ENCODE measurements at regions of chr4 and their contacts with region 1.

Region 1: GRCh38 chr4:77994194-77994721 is 62.9 kb upstream of the FRAS1 start:
- DNase-seq: peak in 1 of 2 experiments; percentile 16
- H3K4me3 ChIP-seq: no peak overlapping the region
- H3K27ac ChIP-seq: no peak overlapping the region
- H3K4me1 ChIP-seq: no peaks in the 10 kb centered on the region
- H3K27me3 ChIP-seq: no peaks in the 10 kb centered on the region
- CTCF ChIP-seq: peak; percentile 66

Region 2: GRCh38 chr4:78171482-78171881 is 177.2 kb after region 1 on chr4:
- CTCF ChIA-PET with region 1: no interaction called
- POLR2A ChIA-PET with region 1: interaction called, 16 read pairs
- intact Hi-C with region 1: no loop called
- DNase-seq: no peak
- H3K4me3 ChIP-seq: no peak overlapping the region
- H3K27ac ChIP-seq: no peak overlapping the region
- H3K4me1 ChIP-seq: peaks cover 15% of the 10 kb centered on the region
- H3K27me3 ChIP-seq: no peaks in the 10 kb centered on the region
- CTCF ChIP-seq: no peak

Region 3: DNA sequence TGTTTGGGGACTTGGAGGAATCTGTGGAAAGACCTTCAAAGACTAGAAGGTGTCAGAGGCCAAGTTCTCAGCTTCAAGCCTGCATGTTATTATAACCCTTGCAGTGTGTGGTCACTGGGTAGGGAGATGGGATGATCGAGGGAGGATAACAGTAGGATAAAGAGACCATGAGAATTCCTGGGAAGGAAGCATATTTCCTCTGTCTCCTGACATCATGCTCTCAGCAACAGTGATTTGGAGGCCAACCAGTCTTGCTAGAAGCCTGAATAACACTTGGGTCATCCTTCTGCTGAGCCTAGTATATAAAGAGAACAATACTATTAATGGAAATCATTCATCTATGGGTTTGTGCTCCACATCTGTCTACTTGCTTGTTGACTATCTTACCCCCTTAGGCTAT is 516.4 kb after region 1 on chr4:
- CTCF ChIA-PET with region 1: no interaction called
- POLR2A ChIA-PET with region 1: no interaction called
- intact Hi-C with region 1: no loop called
- DNase-seq: no peak
- H3K4me3 ChIP-seq: no peak overlapping the region
- H3K27ac ChIP-seq: no peak overlapping the region
- H3K4me1 ChIP-seq: no peaks in the 10 kb centered on the region
- H3K27me3 ChIP-seq: no peaks in the 10 kb centered on the region
- CTCF ChIP-seq: no peak

Measured in PC-9 (cell line).